GM18951 (cell line): ENCODE measurements at regions of chr2 and their contacts with region 1.

Region 1: GRCh38 chr2:98412751-98413458 is 31.8 kb upstream of the INPP4A start:
- POLR2A ChIP-seq: no peak

Region 2: GRCh38 chr2:97697252-97698235 is 715.4 kb before region 1 on chr2:
- in situ Hi-C with region 1: no loop called
- POLR2A ChIP-seq: no peak

Region 3: GRCh38 chr2:98560256-98560771 is 147.4 kb after region 1 on chr2:
- in situ Hi-C with region 1: no loop called
- POLR2A ChIP-seq: no peak

Region 4: DNA sequence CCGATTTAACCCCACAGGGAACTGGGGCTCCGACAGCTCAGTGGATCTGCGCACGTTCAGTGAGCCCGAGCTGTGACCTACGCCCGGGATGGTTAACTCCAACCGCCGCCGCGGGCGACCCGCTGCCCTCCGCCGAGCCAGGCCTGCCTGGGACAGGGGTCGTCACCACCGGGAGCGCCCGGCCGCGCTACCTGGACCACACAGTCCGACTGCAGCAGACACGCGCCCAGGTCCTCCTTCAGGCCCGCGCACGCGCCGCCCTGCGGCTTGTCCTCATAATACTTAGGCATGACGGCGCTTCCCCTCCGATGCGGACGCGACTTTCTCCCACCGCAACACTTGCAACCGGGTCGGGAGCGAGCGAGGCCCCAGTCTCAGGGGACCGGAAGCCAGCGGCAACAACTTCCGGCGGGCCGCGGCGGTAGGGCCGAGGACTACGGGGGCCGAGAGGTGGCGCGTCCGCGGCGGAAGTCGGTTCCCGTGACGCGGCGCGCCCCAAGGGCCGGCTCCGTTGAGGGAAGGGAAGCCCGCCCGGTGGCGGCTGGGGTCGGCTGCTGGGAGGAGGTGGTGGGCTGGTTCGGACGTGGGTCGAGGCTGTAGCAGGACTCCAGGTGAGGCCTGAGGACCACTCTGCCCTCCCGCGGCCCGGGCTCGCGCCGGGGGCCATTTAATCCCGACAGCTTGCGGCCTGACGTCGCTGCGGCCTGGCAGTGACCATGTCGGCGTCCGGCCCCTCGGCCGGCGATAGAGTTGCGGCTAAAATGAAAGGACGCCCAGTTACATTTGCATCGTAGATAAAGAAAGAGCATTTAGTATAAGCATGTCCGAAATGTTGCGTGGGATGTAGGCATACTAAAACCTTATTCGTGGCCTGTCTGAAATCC is 195.5 kb after region 1 on chr2 and contains the starts of genes COA5 and UNC50:
- in situ Hi-C with region 1: loop called (anchors 10 kb)
- POLR2A ChIP-seq: peak; percentile 89

Region 5: GRCh38 chr2:98835831-98836385 is 423.0 kb after region 1 on chr2:
- in situ Hi-C with region 1: loop called (anchors 25 kb)
- POLR2A ChIP-seq: no peak